Colonic mucosa (tissue), 4 donors: ENCODE measurements at regions of chr11 and their contacts with region 1.

Region 1: DNA sequence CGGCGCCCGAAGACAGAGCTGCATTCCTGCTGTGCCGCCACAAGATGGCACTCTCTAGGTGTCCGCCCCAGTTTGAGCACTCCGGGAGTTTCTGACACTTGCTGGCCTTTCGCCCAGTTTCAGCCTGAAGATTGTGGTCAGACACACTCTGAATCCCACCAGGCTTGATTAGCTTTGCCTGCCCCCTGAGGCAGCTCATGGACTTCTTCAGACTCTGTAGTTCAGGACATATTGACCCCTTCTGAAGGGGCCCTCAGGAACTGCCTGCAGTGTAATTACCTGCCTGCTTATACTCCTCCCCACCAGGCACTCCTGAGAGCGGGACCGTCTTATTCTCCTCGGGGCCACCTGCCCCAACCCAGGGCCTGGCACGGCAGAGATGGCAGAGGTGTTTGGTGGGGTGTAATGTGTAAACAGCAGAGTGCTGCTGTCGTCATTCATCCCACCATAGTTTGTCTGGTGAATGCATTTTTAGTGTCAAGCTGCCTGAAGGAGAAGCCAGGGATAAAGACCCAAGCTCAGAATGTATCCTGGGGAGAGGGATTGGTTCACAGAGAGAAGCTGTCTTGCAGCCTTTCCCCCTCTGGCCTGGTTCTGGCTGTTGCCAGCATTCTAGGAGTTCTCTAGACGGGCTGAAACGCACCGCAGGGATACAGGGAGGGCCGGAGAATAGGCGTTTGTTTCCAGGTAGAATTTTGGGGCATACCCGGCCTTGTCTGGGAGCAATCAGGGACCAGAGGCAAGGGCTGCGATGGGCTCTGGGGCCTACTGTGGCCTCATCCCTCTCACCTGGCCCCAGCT is 46.4 kb downstream of the EIF3F start:
- DNase-seq: peak; percentile 67
- H3K4me3 ChIP-seq: no peak overlapping the region
- H3K27ac ChIP-seq: no peak overlapping the region
- H3K4me1 ChIP-seq: no peaks in the 10 kb centered on the region
- H3K27me3 ChIP-seq: no peaks in the 10 kb centered on the region
- CTCF ChIP-seq: peak; percentile 80

Region 2: GRCh38 chr11:7570938-7571521 is 462.5 kb before region 1 on chr11:
- intact Hi-C with region 1: no loop called
- DNase-seq: no peak
- H3K4me3 ChIP-seq: no peak overlapping the region
- H3K27ac ChIP-seq: no peak overlapping the region
- H3K4me1 ChIP-seq: peaks cover 31% of the 10 kb centered on the region
- H3K27me3 ChIP-seq: no peaks in the 10 kb centered on the region
- CTCF ChIP-seq: no peak

Region 3: GRCh38 chr11:8099291-8099899 is 65.9 kb after region 1 on chr11:
- intact Hi-C with region 1: loop called (anchors 5 kb)
- DNase-seq: peak; percentile 84
- H3K4me3 ChIP-seq: no peak overlapping the region
- H3K27ac ChIP-seq: no peak overlapping the region
- H3K4me1 ChIP-seq: no peaks in the 10 kb centered on the region
- H3K27me3 ChIP-seq: no peaks in the 10 kb centered on the region
- CTCF ChIP-seq: peak; percentile 67

Region 4: DNA sequence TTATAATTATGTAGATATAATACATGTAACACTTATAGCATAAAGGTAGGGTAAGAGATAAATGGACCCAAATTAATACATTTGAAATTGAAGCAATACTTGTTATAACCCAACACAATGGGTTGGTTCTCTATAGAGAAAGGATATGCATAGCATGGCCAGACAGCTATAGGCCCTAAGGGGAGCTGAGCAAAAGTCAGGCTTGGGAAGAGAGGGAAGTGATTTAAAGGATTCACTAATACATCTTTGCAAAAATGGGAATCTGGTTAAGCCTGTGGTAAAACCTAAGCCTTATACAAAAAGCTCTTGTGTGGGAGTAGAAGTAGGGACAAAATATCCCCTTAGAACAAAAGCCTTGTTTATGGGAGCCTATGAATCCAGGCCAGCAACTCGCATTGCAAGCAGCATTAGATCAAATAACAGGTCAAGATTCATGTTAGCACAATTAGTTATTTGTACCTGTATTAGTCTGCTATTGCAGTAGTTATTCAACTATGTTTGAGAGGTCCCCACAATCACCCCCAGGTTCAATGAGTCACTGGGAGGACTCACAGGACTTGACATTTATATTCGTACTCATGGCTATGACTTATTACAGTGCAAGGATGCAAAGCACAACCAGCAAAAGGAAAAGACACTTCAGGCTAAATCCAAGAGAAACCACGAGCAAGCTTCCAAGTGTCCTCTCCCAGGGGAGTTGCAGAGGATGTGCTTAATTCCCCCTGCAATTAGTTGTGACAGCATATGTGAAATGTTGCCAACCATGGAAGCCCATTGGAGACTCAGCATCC is 374.8 kb after region 1 on chr11:
- intact Hi-C with region 1: no loop called
- DNase-seq: no peak
- H3K4me3 ChIP-seq: no peak overlapping the region
- H3K27ac ChIP-seq: no peak overlapping the region
- H3K4me1 ChIP-seq: no peaks in the 10 kb centered on the region
- H3K27me3 ChIP-seq: no peaks in the 10 kb centered on the region
- CTCF ChIP-seq: no peak